Aorta (tissue), 5 donors: ENCODE measurements at regions of chr20 and their contacts with region 1.

Region 1: DNA sequence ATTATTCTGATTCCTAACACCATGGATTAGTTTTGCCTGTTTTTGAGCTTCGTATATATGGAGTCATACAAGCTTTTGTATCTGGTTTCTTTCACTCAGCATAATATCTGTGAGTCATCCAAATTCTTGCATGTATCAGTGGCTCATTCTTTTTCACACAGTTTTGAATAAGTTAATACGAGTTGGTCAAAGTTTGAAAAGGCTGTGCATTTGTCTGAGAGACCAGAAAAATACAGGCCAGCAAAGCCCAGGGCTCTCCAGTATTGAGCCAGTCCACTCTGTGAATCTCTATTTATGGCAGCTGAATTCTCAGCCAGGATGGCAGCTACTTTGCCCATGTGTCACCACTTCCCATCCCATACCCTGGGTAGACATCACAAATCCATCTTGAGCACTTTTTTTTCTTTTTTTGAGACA is 7.2 kb upstream of the CHMP4B start:
- DNase-seq: no peak
- ATAC-seq: no peak
- H3K4me3 ChIP-seq: no peak overlapping the region
- H3K27ac ChIP-seq: no peak overlapping the region
- H3K4me1 ChIP-seq: no peaks in the 10 kb centered on the region
- H3K27me3 ChIP-seq: no peaks in the 10 kb centered on the region

Region 2: DNA sequence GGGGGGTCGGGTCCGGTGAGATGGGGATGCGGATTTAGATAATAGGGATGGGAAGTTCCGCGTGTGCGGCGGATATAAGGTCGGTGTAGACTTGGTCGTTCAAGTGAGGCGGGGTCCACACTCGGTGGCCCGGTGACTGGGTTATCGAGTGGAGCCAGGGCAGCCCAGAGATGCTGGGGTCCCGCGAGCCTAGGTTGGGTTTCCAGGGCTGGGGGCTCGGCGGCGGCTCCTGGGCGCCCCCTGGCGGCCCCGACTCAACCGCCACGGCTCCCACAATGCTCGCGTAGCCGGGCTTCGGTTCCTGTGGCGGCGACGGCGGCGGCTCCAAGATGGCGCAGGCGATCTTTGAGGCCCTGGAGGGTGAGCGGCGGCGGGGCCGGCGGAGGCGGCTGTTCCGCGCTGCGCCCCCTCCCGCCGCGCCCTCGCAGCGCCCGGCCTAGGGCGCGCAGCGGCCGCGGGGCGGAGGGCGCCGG is 72.2 kb before region 1 on chr20 and contains the start of gene ZNF341:
- intact Hi-C with region 1: loop called in 1 of 2 experiments (anchors 10 kb)
- DNase-seq: peak; percentile 93 to 96
- ATAC-seq: peak; percentile 94
- H3K4me3 ChIP-seq: peak within 1 kb of the TSS; percentile 23 to 40
- H3K27ac ChIP-seq: peak within 1 kb of the TSS; percentile 12 to 84
- H3K4me1 ChIP-seq: no peaks in the 10 kb centered on the region
- H3K27me3 ChIP-seq: no peaks in the 10 kb centered on the region
- total RNA-seq, gene ZNF341: 2.1 to 3.1 TPM